GM13977 (cell line): ENCODE measurements at regions of chr9 and their contacts with region 1.

Region 1: DNA sequence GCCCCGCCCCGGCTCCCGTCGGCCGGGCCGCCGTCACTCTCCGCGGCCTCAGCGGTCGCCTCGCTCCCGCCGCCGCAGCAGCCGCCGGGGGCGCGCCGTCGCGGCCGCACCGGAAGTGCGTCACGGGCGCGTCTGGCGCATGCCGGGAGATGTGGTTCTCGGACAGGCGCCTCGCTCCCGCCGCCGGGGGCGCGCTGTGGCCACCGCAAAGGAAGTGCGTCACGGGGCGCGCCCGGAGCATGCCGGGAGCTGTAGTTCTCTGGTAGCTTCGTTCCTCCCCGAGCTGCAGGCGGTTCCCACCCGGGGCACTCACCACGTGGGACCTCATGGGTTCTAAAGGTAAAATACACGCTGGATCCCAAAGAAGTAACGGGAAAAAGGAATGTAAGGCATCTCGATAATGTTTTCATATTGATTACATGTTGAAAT is at the start of gene UBAC1:
- DNase-seq: peak; percentile 100
- CTCF ChIP-seq: peak; percentile 31

Region 2: GRCh38 chr9:134896005-134896833 is 1065.1 kb before region 1 on chr9:
- in situ Hi-C with region 1: no loop called
- DNase-seq: no peak
- CTCF ChIP-seq: no peak

Region 3: DNA sequence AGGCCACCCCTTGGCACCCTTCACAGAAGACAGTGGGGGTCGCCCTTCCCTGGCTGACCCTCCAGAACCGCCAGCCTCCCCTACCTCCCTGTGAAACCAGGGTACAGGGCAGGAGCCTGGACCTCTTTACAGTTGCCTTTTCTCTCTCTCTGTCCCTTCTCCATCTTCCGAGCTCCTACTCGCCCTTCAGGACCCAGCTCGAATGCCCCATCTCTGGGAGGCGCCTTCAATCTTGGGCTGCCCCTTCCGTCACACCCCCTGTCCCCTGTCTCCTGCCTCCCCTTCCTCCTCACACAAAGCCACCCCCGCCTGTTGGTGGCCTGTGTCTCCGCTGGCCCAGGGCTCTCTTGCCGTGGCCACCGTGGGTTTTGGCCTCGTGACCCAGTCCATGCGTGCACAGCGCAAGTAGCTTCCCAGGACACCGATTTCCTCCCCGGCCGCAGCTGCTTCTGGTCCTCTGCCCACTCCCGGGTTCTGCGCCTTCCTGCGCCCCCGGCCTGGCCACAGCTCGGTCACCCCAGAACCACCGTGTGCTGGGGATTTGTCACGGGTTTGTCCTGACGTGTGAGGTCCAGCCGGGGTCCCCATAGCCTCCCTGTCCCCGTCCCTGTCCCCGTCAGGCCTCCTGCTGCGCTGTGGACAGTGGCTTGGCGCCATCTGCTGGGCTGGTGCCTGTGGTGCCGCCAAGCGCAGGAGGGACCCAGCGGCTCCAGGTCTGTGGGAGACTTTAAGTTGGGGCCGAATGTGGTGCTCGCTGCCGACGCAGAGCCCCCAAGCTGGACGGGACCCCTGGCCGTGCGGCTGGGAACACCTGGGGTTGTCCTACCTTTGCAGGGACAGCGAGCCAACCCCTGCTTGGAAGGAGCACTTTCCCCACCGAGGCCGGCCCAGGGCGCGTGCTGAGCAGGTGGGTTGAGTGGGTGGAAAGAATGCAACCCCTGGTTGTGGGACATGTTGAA is 161.4 kb after region 1 on chr9:
- in situ Hi-C with region 1: loop called (anchors 10 kb)
- DNase-seq: peak; percentile 88
- CTCF ChIP-seq: peak; percentile 97